Heart right ventricle (tissue), 16 donors: ENCODE measurements at regions of chr3 and their contacts with region 1.

Region 1: GRCh38 chr3:193134844-193135243 is 106.2 kb upstream of the PLAAT1 start:
- DNase-seq: no peak
- ATAC-seq: peak in 6 of 8 donors; percentile 61 to 96 (median 78)
- H3K4me3 ChIP-seq: no peak overlapping the region
- H3K27ac ChIP-seq: no peak overlapping the region
- H3K4me1 ChIP-seq: no peaks in the 10 kb centered on the region
- H3K27me3 ChIP-seq: no peaks in the 10 kb centered on the region
- CTCF ChIP-seq: no peak

Region 2: DNA sequence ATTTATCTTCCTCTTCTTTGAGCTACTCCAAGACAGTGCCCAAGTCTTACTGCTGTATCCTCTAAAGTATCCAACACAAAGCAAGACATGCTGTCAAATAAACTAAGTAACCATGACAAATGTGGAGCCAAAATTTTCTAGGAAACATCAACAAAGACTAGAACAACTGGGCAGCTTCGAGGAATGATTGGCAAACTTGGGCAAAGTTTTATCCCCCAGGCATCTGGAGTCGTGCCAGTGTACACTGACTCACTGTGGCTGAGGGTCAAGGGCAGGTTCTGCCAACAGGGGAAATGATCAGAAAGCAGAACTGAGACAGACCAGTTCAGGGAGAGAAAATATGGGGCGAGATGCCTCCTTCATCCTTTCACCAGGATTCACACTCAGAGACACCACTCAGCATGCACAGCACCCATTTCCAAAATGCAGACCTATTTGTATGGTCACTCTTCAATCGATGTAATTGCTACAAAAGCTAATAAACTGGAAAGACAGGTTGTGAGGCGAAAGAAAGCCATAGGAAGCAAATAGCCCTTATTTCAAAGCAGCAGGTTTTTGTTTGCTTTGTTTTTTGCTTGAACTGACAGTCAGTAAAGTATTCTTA is 282.9 kb before region 1 on chr3:
- intact Hi-C with region 1: no loop called
- DNase-seq: peak; percentile 31 to 50
- ATAC-seq: peak; percentile 25 to 80 (median 63)
- H3K4me3 ChIP-seq: no peak overlapping the region
- H3K27ac ChIP-seq: no peak overlapping the region
- H3K4me1 ChIP-seq: peaks cover 0 to 37% (median 14%) of the 10 kb centered on the region in 9 donors
- H3K27me3 ChIP-seq: no peaks in the 10 kb centered on the region
- CTCF ChIP-seq: no peak

Region 3: GRCh38 chr3:192986379-192986778 is 148.5 kb before region 1 on chr3:
- intact Hi-C with region 1: loop called in 1 of 10 experiments (anchors 5 kb)
- DNase-seq: no peak
- ATAC-seq: no peak
- H3K4me3 ChIP-seq: no peak overlapping the region
- H3K27ac ChIP-seq: no peak overlapping the region
- H3K4me1 ChIP-seq: no peaks in the 10 kb centered on the region
- H3K27me3 ChIP-seq: no peaks in the 10 kb centered on the region
- CTCF ChIP-seq: no peak